ENCODE measurements at regions of chr18 and their contacts with region 1.

Region 1: DNA sequence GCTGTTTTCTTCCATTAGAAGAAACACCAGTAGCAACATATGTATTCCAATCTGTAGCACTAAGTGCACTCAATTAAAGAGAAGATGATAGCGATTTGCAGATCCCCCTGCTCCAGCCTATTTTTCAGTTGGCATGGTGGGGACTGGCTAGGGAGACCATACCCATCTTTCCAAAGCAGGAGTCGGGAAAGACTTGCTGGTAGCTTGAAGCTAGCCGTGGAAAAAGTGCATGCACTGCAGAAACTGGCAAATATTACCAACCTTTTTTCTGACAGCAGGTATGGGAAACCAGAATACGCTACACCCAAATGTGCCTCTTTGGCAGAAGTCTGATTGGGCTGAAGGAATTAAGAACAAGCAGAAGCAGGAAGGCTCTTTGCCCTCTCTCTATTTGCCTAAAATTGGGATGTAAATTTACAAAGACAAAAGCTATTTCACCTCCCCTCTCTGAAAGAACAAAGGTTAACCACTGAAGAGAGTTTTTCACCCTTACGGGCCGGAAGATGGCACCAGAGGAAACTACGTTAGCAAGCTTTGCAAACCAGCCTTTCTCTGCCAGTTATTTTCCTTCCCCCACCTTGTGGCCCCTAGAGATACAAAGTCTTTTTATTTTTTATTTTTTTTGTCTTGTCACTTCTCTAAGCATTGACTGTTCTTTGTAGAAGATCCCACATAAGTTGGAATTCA is 273.1 kb downstream of the DLGAP1 start:
- DNase-seq: no peak
- ATAC-seq: no peak
- H3K4me3 ChIP-seq: no peak overlapping the region
- H3K27ac ChIP-seq: no peak overlapping the region
- H3K4me1 ChIP-seq: no peaks in the 10 kb centered on the region
- H3K27me3 ChIP-seq: no peaks in the 10 kb centered on the region
- CTCF ChIP-seq: no peak
- POLR2A ChIP-seq: no peak
- RAD21 ChIP-seq: no peak

Region 2: DNA sequence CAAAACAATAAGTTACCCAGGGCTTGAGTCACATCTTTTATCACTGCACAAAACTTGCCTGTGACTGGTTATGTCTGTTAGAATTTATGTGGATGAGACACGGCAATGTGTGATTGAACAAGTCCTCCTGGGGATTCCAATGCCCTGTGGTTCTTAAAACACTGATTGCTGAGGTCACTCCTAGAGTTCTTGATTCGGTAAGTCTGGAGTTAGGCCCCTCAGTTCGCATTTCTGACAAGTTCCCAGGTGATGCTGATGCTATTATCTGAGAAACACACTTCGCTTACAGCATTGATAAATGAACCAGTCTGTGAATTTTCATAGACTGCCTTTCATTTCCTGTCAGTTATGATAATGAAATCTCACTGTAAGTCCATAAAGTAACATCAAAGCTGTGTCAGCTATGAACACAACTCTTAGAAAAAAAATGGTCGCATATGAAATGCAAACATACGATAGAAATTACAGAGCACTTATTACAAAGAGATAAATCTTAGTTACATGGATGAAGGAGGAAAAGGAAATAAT is 59.1 kb after region 1 on chr18:
- CTCF ChIA-PET with region 1: no interaction called
- POLR2A ChIA-PET with region 1: no interaction called
- RAD21 ChIA-PET with region 1: no interaction called
- intact Hi-C with region 1: loop called (anchors 10 kb)
- DNase-seq: no peak
- ATAC-seq: no peak
- H3K4me3 ChIP-seq: no peak overlapping the region
- H3K27ac ChIP-seq: no peak overlapping the region
- H3K4me1 ChIP-seq: no peaks in the 10 kb centered on the region
- H3K27me3 ChIP-seq: no peaks in the 10 kb centered on the region
- CTCF ChIP-seq: no peak
- POLR2A ChIP-seq: no peak
- RAD21 ChIP-seq: no peak

Region 3: GRCh38 chr18:4391859-4392258 is 209.8 kb after region 1 on chr18:
- CTCF ChIA-PET with region 1: no interaction called
- POLR2A ChIA-PET with region 1: no interaction called
- RAD21 ChIA-PET with region 1: no interaction called
- intact Hi-C with region 1: no loop called
- DNase-seq: no peak
- ATAC-seq: no peak
- H3K4me3 ChIP-seq: no peak overlapping the region
- H3K27ac ChIP-seq: no peak overlapping the region
- H3K4me1 ChIP-seq: no peaks in the 10 kb centered on the region
- H3K27me3 ChIP-seq: no peaks in the 10 kb centered on the region
- CTCF ChIP-seq: no peak
- POLR2A ChIP-seq: no peak
- RAD21 ChIP-seq: no peak